ENCODE measurements at regions of chr15 and their contacts with region 1.

Region 1: DNA sequence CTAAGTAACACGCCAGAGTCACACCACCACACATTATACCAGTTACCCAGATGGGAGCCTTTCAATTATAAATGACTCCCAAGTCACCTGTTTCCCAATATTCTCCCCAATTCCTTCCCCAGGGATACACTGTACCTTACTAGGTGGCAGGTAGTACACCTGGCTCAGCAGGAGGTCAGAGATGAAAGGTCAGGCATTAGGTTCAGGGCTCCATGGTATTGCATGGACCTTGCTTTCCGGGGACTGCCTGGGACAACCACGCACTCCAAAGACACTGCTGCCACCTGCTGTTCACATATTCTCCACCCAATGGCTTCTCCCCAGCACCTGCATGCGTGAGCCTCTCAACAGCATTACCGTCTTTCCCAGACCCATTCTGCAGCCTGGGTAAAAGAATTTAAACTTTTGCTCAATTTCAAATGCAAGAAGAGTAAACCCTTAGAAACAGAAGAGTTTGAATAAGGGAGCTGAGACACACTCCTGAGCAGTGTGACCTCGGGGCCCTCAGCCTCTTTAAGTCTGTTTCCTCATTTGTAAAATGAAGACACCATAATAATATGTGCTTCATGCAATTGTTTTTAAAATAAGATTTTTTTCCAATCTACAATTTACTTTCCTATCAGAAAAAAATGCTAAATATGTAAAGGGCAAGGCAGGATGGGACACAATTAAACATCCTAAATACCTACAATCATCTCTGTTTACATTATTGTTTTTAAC is 28.0 kb upstream of the LACTB start:
- DNase-seq: peak; percentile 81 to 91
- ATAC-seq: peak; percentile 70 to 76
- H3K4me3 ChIP-seq: no peak overlapping the region
- H3K27ac ChIP-seq: peak overlapping the region; percentile 91 to 93
- H3K4me1 ChIP-seq: peaks cover 78% of the 10 kb centered on the region
- CTCF ChIP-seq: peak; percentile 98
- EP300 ChIP-seq: no peak
- POLR2A ChIP-seq: no peak
- RAD21 ChIP-seq: peak; percentile 100

Region 2: GRCh38 chr15:62389885-62390790 is 703.5 kb before region 1 on chr15:
- CTCF ChIA-PET with region 1: interaction called, 12 read pairs
- POLR2A ChIA-PET with region 1: interaction called, 3 read pairs
- DNase-seq: peak; percentile 79 to 82
- ATAC-seq: peak; percentile 79 to 83
- H3K4me3 ChIP-seq: peak within 1 kb of the TSS; percentile 88
- H3K27ac ChIP-seq: peak within 1 kb of the TSS; percentile 92 to 95
- H3K4me1 ChIP-seq: peaks cover 14% of the 10 kb centered on the region
- CTCF ChIP-seq: no peak
- EP300 ChIP-seq: no peak
- POLR2A ChIP-seq: peak; percentile 97
- RAD21 ChIP-seq: peak in 1 of 2 experiments; percentile 11; a peak in 3 of 5 replicates

Region 3: DNA sequence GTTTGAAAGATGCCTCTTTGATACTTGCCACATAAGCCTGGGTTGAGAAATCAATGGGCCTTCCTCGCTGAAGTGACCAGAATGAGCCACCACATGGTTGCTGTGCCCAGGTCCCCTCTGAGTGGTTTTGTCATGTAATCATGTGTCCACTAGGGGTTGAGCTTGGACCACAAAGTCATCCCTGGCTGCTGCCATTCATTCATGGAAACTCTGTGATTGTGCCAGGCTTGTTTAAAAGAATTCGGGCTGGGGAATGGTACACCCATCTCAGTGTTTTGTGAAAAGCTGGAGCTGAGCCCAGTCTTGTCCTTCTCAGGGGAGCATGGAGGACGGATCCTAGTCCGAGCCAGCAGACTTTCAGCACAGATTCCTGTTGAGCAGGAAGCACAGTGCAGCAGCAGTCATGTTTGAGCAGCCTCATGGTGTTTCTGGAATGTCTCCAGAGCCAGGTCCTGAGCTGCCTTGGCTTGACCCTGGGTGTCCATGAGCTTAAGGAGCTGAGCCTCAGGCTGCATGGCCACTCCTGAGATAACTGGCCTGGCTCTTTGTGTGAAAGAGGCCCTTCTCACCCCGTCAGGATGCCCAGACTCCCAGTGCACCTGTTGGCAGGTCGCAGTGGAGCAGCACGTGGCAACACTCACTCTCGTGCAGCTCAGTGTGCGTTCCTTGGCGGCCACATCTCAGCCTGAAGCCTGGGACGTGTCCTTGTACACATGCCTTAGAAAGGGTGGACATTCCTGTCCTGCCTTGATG is 311.4 kb before region 1 on chr15:
- CTCF ChIA-PET with region 1: interaction called, 87 read pairs
- POLR2A ChIA-PET with region 1: no interaction called
- DNase-seq: peak; percentile 81 to 90
- ATAC-seq: peak; percentile 93 to 95
- H3K4me3 ChIP-seq: no peak overlapping the region
- H3K27ac ChIP-seq: peak overlapping the region; percentile 71 to 82
- H3K4me1 ChIP-seq: peaks cover 42% of the 10 kb centered on the region
- CTCF ChIP-seq: peak; percentile 98
- EP300 ChIP-seq: no peak
- POLR2A ChIP-seq: no peak
- RAD21 ChIP-seq: peak; percentile 100

Region 4: GRCh38 chr15:63073497-63074172 is 20.0 kb before region 1 on chr15:
- CTCF ChIA-PET with region 1: interaction called, 1,136 read pairs
- POLR2A ChIA-PET with region 1: interaction called, 11 read pairs
- DNase-seq: peak in 1 of 2 experiments; percentile 53
- ATAC-seq: peak; percentile 27 to 37
- H3K4me3 ChIP-seq: no peak overlapping the region
- H3K27ac ChIP-seq: peak overlapping the region; percentile 3 to 51; a peak in 3 of 6 replicates
- H3K4me1 ChIP-seq: peaks cover 53% of the 10 kb centered on the region
- CTCF ChIP-seq: no peak
- EP300 ChIP-seq: no peak
- POLR2A ChIP-seq: no peak
- RAD21 ChIP-seq: 0 out of 5 replicates have a peak, but pooled peaks of 1 of the 2 experiments have one; percentile 1

Region 5: DNA sequence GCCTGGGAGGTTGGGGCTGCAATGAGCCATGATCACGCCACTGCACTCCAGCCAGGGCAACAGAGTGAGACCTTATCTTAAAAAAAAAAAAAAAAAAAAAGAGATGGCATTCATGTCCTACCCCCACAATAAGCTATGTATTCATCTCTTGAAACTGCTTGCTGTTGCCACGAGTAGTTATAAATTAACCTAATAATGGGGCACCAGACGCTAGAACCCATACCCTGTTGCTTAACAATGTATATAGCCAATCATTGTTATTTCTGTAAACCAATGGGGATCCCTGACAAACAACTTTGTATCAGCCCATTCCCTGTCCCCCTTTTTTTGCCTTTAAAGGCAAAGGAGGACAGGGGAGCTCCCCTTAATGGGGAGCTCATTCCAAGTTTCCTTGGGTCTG is 25.2 kb after region 1 on chr15:
- CTCF ChIA-PET with region 1: interaction called, 10 read pairs
- POLR2A ChIA-PET with region 1: no interaction called
- DNase-seq: no peak
- ATAC-seq: no peak
- H3K4me3 ChIP-seq: no peak overlapping the region
- H3K27ac ChIP-seq: peak overlapping the region in 1 of 2 experiments; percentile 10; a peak in 2 of 6 replicates
- H3K4me1 ChIP-seq: peaks cover 18% of the 10 kb centered on the region; the same call in 2 of the 3 replicates
- CTCF ChIP-seq: no peak
- EP300 ChIP-seq: no peak
- POLR2A ChIP-seq: no peak
- RAD21 ChIP-seq: no peak

Region 6: GRCh38 chr15:63146669-63147068 is 53.0 kb after region 1 on chr15:
- CTCF ChIA-PET with region 1: interaction called, 12 read pairs
- POLR2A ChIA-PET with region 1: interaction called, 4 read pairs
- DNase-seq: peak in 1 of 2 experiments; percentile 41
- ATAC-seq: peak; percentile 51; a peak in 5 of 6 replicates
- H3K4me3 ChIP-seq: no peak overlapping the region
- H3K27ac ChIP-seq: peak overlapping the region in 1 of 2 experiments; percentile 40; a peak in 3 of 6 replicates
- H3K4me1 ChIP-seq: peaks cover 16% of the 10 kb centered on the region
- CTCF ChIP-seq: peak; percentile 34; the same call in 2 of the 3 replicates
- EP300 ChIP-seq: no peak
- POLR2A ChIP-seq: no peak
- RAD21 ChIP-seq: peak; percentile 48 to 50

Measured in A549 (cell line).